Mammary epithelial cell (primary cell): ENCODE measurements at regions of chr6 and their contacts with region 1.

Region 1: GRCh38 chr6:83884523-83884922 is 25.0 kb downstream of the CYB5R4 start:
- DNase-seq: peak; percentile 34
- H3K4me3 ChIP-seq: no peak overlapping the region
- H3K27ac ChIP-seq: no peak overlapping the region
- H3K4me1 ChIP-seq: peaks cover 6% of the 10 kb centered on the region
- H3K27me3 ChIP-seq: no peaks in the 10 kb centered on the region
- CTCF ChIP-seq: peak; percentile 66

Region 2: GRCh38 chr6:83952830-83953229 is 68.3 kb after region 1 on chr6:
- CTCF ChIA-PET with region 1: no interaction called
- dilution Hi-C with region 1: no loop called
- in situ Hi-C with region 1: no loop called
- intact Hi-C with region 1: no loop called
- DNase-seq: no peak
- H3K4me3 ChIP-seq: no peak overlapping the region
- H3K27ac ChIP-seq: no peak overlapping the region
- H3K4me1 ChIP-seq: no peaks in the 10 kb centered on the region
- H3K27me3 ChIP-seq: no peaks in the 10 kb centered on the region
- CTCF ChIP-seq: no peak

Region 3: DNA sequence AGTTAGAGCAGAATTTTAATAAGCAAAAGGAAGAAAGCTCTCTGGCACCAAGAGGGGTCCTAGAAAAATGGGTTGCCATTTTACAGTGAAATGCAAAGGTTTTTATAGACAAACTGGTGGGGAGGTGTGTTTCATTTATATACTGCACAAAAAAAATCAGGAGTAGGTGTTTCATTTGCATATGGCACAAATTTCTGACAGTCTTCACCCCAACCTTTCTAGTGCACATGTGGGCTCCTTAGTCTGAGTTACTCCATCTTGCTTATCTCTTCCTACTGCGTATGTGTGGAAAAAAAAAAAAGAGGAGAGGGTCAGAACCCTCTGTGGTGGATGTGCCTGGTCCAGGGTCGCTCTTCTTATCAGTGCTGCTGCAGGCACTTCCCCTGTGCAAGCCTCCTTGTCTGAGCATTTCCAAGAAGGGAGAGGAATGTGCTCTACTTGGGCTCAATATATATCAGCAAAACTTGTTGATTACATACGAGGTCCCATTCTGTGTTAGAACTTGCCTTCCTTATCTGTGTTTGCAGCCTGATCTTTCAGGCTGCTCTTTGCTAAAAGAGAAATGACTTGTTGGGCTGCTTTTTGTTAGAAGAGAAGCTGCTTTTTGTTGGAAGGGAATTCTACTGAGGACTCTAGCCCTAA is 90.0 kb after region 1 on chr6:
- CTCF ChIA-PET with region 1: no interaction called
- dilution Hi-C with region 1: no loop called
- in situ Hi-C with region 1: no loop called
- intact Hi-C with region 1: no loop called
- DNase-seq: no peak
- H3K4me3 ChIP-seq: no peak overlapping the region
- H3K27ac ChIP-seq: no peak overlapping the region
- H3K4me1 ChIP-seq: no peaks in the 10 kb centered on the region
- H3K27me3 ChIP-seq: no peaks in the 10 kb centered on the region
- CTCF ChIP-seq: no peak

Region 4: DNA sequence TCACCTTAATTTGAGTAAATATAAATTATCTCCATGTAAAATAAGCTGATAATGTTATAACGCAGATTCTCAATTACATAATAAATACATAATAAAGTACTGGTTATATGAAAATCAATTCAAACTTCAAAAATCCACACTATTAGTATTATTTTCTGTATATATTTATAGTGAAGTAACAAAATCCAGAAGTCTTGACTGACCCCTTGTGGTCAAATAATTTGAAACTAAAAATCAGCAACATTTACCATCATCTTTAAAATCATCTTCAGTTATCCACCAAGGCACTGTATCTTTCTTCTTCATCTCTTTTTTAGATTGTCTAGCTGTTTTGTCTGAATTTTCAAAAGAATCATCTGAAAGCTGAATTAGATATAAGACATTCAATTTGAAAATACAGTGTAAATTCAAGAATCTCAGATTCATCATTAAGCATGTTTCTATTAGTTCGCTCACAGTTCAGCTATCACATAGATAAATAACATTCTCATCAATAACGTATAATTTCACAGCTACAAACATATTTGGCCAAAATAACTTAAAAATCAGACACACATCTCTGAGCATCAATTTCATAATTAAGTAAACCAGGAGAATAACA is 336.4 kb after region 1 on chr6:
- CTCF ChIA-PET with region 1: no interaction called
- dilution Hi-C with region 1: no loop called
- in situ Hi-C with region 1: loop called in 1 of 2 experiments (anchors 5 kb)
- intact Hi-C with region 1: loop called (anchors 1 kb)
- DNase-seq: peak; percentile 11
- H3K4me3 ChIP-seq: no peak overlapping the region
- H3K27ac ChIP-seq: no peak overlapping the region
- H3K4me1 ChIP-seq: no peaks in the 10 kb centered on the region
- H3K27me3 ChIP-seq: no peaks in the 10 kb centered on the region
- CTCF ChIP-seq: peak; percentile 43 to 52

Region 5: GRCh38 chr6:84411060-84411629 is 526.6 kb after region 1 on chr6:
- CTCF ChIA-PET with region 1: no interaction called
- dilution Hi-C with region 1: no loop called
- in situ Hi-C with region 1: no loop called
- intact Hi-C with region 1: loop called (anchors 10 kb)
- DNase-seq: no peak
- H3K4me3 ChIP-seq: no peak overlapping the region
- H3K27ac ChIP-seq: no peak overlapping the region
- H3K4me1 ChIP-seq: no peaks in the 10 kb centered on the region
- H3K27me3 ChIP-seq: peaks cover 2% of the 10 kb centered on the region
- CTCF ChIP-seq: no peak